Left cardiac atrium (tissue), 4 donors: ENCODE measurements at regions of chr21 and their contacts with region 1.

Region 1: DNA sequence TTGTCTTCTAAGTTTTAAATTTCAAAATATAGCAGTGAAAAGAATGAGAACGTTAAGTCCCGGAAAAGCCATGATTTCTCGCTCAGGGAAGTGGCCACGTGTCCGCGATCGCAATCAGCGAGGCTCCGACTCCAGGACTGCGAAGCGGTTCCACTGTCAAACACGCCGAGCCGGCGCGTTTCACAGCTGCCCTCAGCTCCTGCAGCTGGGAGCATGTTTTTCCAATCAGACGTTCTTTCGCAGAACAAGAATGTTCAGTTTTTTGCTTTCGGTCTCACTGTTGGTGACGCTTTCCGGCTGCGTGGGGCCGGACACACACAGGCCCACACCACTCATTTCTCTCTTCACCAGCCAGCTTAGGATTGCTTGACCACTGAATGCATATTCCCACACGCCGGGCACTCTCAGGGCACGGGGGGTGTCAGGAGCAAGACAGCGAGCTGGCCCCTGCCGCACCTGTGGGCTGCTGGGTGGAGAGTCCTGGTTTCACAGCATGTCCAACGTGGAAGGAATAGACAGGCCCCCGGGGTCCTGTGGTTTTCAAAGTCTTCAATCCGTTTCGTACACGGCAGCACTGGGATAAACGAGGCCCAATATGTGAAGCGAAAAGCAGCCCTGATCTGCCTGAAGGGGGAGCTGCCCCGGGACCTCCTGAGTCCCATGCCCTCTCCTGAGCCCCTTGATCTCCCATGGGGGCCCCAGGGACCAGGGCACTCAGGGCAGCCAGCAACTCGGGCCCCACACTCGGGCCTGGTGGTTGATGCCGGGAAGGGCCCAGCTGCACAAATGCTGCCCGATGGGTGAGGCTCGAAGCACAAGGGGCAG is 47.3 kb upstream of the COL18A1 start:
- DNase-seq: peak; percentile 80
- ATAC-seq: peak; percentile 58 to 64

Region 2: DNA sequence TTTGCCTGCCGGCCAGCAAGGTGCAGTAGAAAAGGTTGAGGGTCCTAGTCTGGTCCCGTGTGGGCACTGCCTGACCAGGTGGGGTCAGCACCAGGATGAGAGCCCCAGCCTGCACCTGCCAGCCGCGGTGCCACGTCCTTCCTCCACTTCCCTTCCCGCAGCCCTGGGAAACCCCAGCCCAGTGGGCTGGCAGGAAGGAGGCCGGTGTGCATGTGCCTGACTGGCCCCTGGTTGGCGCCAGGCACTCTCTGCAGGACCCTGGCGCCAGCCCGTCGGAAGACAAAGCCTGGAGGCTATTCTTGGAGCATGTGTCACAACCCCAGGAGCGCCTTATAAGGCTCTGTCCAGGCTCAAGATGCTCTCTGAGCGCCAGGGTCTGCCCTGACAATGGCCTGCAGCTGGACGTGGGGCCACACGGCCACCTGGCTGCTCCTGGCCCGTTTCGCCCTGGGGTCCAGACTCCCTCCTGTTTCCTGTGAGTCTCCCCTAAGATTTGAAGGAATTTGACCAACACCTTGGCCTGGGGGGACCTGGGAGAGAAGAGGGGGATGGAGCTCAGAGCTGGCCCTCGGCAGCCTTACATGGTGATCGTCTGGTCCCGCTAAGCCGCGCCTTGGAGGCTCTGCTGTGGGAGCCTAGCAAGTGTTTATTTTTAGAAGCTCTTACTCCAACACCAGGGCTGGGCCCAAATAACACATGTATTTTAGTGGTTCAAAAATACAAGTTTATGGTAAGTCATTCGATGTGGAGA is 38.0 kb before region 1 on chr21:
- intact Hi-C with region 1: loop called in 1 of 2 experiments (anchors 5 kb)
- DNase-seq: peak; percentile 74
- ATAC-seq: peak; percentile 75 to 76